Activated T-helper 1 cell treated with anti-CD3 and anti-CD28 coated beads, Interleukin-12 subunit alpha, Interleukin-12 subunit beta, Interleukin-2, Interleukin-4 antibody, amounts not matched to agents 30 ng/mL and 10 ng/mL and 1 ng/mL, durations not matched to agents 14 hours and 24 hours and 36 hours (primary cell): ENCODE measurements at regions of chr1 and their contacts with region 1.

Region 1: GRCh38 chr1:114757455-114758250 is at the start of gene CSDE1:
- DNase-seq: peak; percentile 96
- H3K4me3 Mint-ChIP-seq: peak within 1 kb of the TSS; percentile 99
- H3K27ac Mint-ChIP-seq: peak within 1 kb of the TSS; percentile 100
- H3K4me1 Mint-ChIP-seq: peaks cover 42% of the 10 kb centered on the region
- H3K27me3 Mint-ChIP-seq: no peaks in the 10 kb centered on the region
- total RNA-seq, gene CSDE1: 398 and 421 TPM in 2 replicates

Region 2: DNA sequence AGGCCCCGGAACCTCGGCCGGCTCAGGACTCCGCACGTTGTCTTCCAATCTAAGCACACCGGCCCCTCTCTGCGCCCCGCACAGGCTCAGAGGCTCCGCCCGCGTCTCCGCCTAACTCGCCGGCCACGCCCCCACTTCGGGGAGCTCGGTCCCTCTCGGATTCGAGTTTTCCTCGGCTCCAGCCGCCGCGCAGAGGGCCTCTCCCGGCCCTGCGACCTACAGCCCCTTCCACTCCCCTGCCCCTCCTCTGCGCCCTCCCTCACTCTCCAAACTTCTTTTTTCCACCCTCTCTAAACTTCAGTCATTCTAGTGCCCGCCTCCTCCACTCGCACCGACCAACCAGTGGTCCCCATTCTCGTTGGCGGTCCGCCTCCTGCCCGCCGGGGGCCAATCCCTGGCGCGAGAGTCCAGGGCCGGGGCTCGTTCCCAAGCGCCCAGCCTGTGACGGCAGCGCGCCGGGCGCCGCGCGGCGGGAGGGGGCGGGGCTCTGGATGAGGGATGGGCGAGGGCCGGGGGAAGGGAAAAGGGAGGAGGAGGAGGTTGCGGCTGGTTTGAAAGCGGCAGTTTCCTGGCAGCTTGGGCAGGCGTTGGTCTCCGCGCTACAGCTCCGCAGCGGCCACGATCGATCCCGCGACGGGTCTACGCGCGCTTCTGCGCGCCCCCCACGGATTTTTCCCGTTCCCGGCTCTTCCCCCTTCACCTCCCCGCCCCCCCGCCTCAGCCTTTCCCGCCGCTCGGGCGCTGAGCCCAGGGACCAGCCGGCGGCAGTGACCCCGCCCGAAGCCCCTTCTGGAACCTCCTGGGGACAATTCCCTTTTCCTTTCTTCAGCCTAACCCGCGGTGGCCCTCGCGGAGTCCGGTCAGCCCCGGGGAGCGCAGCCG is 1367.5 kb before region 1 on chr1 and contains the start of gene MAGI3:
- intact Hi-C with region 1: loop called (anchors 2 kb)
- DNase-seq: peak; percentile 95
- H3K4me3 Mint-ChIP-seq: peak within 1 kb of the TSS; percentile 88
- H3K27ac Mint-ChIP-seq: peak within 1 kb of the TSS; percentile 79
- H3K4me1 Mint-ChIP-seq: peaks cover 30% of the 10 kb centered on the region
- H3K27me3 Mint-ChIP-seq: peaks cover 33% of the 10 kb centered on the region
- total RNA-seq, gene MAGI3: 3.0 and 3.2 TPM in 2 replicates

Region 3: DNA sequence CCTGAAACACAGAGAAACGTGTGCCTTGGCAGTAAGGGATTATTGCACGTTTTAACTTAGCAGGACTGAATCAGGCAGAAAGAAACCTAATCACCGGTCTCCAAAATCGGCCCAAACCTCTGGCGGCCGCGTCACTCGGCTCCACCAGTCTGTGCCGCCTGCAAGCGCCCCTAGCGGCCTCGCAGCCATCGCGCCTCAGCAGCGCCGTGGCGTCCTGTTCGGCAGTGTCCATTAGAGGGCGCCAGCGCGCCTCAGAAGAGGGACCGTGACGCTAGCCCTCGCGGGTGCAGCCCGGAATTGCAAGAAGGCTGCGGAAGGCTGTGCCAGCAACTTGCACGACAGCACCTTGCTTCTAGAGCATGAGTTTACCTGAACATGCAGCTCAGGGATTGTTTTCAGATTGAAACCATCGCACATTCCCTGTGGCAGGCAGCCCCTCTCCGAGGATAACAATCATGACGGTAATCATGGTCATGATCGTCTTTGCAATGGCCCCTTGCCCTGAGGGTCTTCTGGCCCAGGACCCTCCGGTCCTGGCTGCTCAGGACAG is 411.1 kb before region 1 on chr1:
- intact Hi-C with region 1: loop called (anchors 1 kb)
- DNase-seq: peak; percentile 98
- H3K4me3 Mint-ChIP-seq: peak overlapping the region; percentile 93
- H3K27ac Mint-ChIP-seq: peak overlapping the region; percentile 91
- H3K4me1 Mint-ChIP-seq: peaks cover 26% of the 10 kb centered on the region
- H3K27me3 Mint-ChIP-seq: no peaks in the 10 kb centered on the region

Region 4: GRCh38 chr1:114581335-114582287 is 176.0 kb before region 1 on chr1 and contains the start of gene BCAS2:
- intact Hi-C with region 1: loop called (anchors 1 kb)
- DNase-seq: peak; percentile 94
- H3K4me3 Mint-ChIP-seq: peak within 1 kb of the TSS; percentile 91
- H3K27ac Mint-ChIP-seq: peak within 1 kb of the TSS; percentile 92
- H3K4me1 Mint-ChIP-seq: peaks cover 34% of the 10 kb centered on the region
- H3K27me3 Mint-ChIP-seq: peaks cover 5% of the 10 kb centered on the region
- total RNA-seq, gene BCAS2: 61.9 and 63.0 TPM in 2 replicates

Region 5: DNA sequence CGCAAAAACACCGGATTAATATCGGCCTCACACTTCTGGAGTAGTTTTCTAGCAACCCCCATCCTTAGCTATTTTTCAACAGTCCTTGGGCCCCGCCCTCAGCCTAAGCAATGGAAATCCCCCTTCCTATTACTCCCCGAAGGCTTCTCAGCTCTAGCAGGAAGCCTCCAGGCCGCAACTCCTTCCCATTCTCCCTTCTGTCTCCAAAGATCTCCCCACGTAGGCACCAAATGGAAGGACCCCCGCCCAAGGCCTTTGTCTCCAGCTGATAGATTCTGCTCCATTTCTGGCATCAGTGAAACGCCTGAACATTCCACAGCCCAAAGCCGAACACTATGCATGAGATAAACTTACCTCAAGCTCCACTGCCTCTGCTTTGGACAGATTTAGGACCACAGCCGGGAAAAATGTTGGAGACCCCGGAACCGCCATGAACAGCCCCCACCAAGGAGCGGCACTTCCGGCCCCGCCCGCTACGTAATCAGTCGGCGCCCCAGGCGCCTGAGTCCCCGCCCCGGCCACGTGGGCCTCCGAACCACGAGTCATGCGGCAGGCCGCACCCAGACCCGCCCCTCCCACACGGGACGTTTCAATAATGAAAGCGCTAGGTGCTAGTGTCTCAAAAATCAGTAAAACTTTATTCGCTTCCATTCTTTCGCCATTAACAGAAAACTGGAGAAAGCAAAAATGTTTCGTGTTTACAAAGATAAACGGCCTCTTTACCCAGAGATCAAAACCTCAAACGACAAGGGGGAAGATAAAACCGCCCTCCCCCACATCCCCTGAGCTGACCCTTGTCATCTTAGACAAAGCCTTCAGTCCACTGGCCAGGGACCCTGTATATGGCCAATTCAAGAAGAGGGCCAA is 41.1 kb before region 1 on chr1 and contains the start of gene NRAS:
- intact Hi-C with region 1: loop called (anchors 1 kb)
- DNase-seq: peak; percentile 93
- H3K4me3 Mint-ChIP-seq: peak within 1 kb of the TSS; percentile 99
- H3K27ac Mint-ChIP-seq: peak within 1 kb of the TSS; percentile 99
- H3K4me1 Mint-ChIP-seq: peaks cover 39% of the 10 kb centered on the region
- H3K27me3 Mint-ChIP-seq: no peaks in the 10 kb centered on the region
- total RNA-seq, gene NRAS: 57.5 and 62.1 TPM in 2 replicates

Region 6: GRCh38 chr1:114780344-114781226 is 22.9 kb after region 1 on chr1 and contains the start of gene SIKE1:
- intact Hi-C with region 1: loop called (anchors 1 kb)
- DNase-seq: peak; percentile 92
- H3K4me3 Mint-ChIP-seq: peak within 1 kb of the TSS; percentile 100
- H3K27ac Mint-ChIP-seq: peak within 1 kb of the TSS; percentile 96
- H3K4me1 Mint-ChIP-seq: peaks cover 34% of the 10 kb centered on the region
- H3K27me3 Mint-ChIP-seq: peaks cover 4% of the 10 kb centered on the region
- total RNA-seq, gene SIKE1: 59.4 and 65.0 TPM in 2 replicates

Region 7: GRCh38 chr1:114979278-114979891 is 221.7 kb after region 1 on chr1:
- intact Hi-C with region 1: no loop called
- DNase-seq: peak; percentile 27
- H3K4me3 Mint-ChIP-seq: no peak overlapping the region
- H3K27ac Mint-ChIP-seq: no peak overlapping the region
- H3K4me1 Mint-ChIP-seq: no peaks in the 10 kb centered on the region
- H3K27me3 Mint-ChIP-seq: peaks cover 8% of the 10 kb centered on the region

Region 8: GRCh38 chr1:115648717-115649691 is 891.4 kb after region 1 on chr1:
- intact Hi-C with region 1: loop called (anchors 5 kb)
- DNase-seq: peak; percentile 36
- H3K4me3 Mint-ChIP-seq: no peak overlapping the region
- H3K27ac Mint-ChIP-seq: no peak overlapping the region
- H3K4me1 Mint-ChIP-seq: peaks cover 6% of the 10 kb centered on the region
- H3K27me3 Mint-ChIP-seq: peaks cover 6% of the 10 kb centered on the region